ENCODE measurements at regions of chr9 and their contacts with region 1.

Region 1: DNA sequence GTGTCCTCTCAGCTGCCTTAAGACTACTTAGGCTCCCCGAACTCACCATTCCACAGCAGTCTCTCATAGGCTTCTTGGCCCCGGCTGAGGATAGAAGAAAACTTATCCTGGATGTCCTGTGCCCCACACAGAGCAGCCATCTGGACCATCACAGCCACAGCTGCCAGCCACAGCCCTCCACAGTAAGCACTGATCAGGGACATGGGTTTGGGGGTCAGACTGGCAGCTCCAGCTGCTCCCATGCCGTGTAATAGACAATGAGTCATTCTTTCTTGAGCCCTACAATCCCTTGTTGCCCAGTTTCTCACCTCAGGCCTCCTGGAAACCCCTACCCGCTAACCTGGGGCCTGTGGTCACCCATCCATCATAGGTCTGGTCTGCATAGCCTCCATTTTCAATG is 5.7 kb downstream of the CREB3 start:
- DNase-seq: no peak
- H3K4me3 ChIP-seq: no peak overlapping the region
- H3K4me3 Mint-ChIP-seq: peak overlapping the region in 1 of 7 donors; percentile 9
- H3K27ac ChIP-seq: no peak overlapping the region
- H3K27ac Mint-ChIP-seq: peak overlapping the region in 1 of 8 donors; percentile 78
- H3K4me1 ChIP-seq: peaks cover 20% of the 10 kb centered on the region
- H3K4me1 Mint-ChIP-seq: peaks cover 25 to 36% (median 32%) of the 10 kb centered on the region in 3 donors
- H3K27me3 ChIP-seq: no peaks in the 10 kb centered on the region
- H3K27me3 Mint-ChIP-seq: no peaks in the 10 kb centered on the region

Region 2: DNA sequence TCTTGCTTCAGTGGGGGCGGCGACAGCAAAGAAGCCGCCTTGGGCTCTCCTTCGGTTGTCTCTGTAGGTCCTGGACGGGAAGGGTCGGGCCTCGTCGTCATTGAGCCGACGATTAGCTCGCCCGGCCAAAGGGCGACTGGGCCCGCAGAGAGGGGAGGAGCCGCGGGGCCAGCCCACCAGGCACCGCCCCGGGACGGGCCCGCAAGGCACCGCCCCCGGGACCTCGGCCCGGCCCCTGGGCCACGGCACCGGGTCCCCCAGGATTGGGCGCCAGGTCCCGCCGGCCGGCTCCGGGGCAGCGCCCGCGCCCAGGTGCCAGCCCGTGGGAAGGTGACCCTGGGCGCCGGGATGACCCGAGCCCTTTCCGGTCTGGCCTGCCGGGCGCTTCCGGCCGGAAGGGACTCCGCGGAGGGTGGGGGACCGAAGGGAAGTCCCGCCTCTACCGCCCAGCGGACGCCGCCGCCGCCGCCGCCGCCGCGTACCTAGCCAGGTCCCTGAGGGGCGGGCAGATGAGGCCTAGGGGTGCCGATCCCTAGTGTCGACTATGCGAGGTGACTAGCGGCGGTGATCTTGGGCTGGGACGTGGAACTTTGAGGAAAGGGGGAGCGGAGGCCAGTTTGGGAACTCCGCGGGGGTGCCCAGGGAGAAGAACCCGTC is 10.8 kb after region 1 on chr9 and contains the starts of genes GBA2 and RGP1:
- CTCF ChIA-PET with region 1: interaction called, 68 read pairs
- POLR2A ChIA-PET with region 1: interaction called, 45 read pairs
- DNase-seq: peak; percentile 59 to 79 (median 66)
- H3K4me3 ChIP-seq: peak within 1 kb of the TSS; percentile 88
- H3K4me3 Mint-ChIP-seq: peak within 1 kb of the TSS; percentile 91 to 98 (median 96)
- H3K27ac ChIP-seq: peak within 1 kb of the TSS; percentile 75
- H3K27ac Mint-ChIP-seq: peak within 1 kb of the TSS; percentile 83 to 98 (median 93)
- H3K4me1 ChIP-seq: peaks cover 38% of the 10 kb centered on the region
- H3K4me1 Mint-ChIP-seq: peaks cover 36 to 67% (median 44%) of the 10 kb centered on the region in 3 donors
- H3K27me3 ChIP-seq: no peaks in the 10 kb centered on the region
- H3K27me3 Mint-ChIP-seq: no peaks in the 10 kb centered on the region
- total RNA-seq, gene GBA2: 41.8 to 42.0 TPM
- total RNA-seq, gene RGP1: 19.9 to 21.9 TPM

Region 3: GRCh38 chr9:35844716-35845270 is 106.6 kb after region 1 on chr9:
- CTCF ChIA-PET with region 1: no interaction called
- POLR2A ChIA-PET with region 1: no interaction called
- DNase-seq: peak in 2 of 5 donors; percentile 46 to 68
- H3K4me3 ChIP-seq: no peak overlapping the region
- H3K4me3 Mint-ChIP-seq: no peak overlapping the region
- H3K27ac ChIP-seq: no peak overlapping the region
- H3K27ac Mint-ChIP-seq: peak overlapping the region in 6 of 8 donors; percentile 8 to 74 (median 46)
- H3K4me1 ChIP-seq: peaks cover 18% of the 10 kb centered on the region
- H3K4me1 Mint-ChIP-seq: peaks cover 16 to 17% (median 16%) of the 10 kb centered on the region in 3 donors
- H3K27me3 ChIP-seq: no peaks in the 10 kb centered on the region
- H3K27me3 Mint-ChIP-seq: no peaks in the 10 kb centered on the region

Measured in CD8-positive, alpha-beta memory T cell (primary cell).